ENCODE measurements at regions of chr12 and their contacts with region 1.

Region 1: DNA sequence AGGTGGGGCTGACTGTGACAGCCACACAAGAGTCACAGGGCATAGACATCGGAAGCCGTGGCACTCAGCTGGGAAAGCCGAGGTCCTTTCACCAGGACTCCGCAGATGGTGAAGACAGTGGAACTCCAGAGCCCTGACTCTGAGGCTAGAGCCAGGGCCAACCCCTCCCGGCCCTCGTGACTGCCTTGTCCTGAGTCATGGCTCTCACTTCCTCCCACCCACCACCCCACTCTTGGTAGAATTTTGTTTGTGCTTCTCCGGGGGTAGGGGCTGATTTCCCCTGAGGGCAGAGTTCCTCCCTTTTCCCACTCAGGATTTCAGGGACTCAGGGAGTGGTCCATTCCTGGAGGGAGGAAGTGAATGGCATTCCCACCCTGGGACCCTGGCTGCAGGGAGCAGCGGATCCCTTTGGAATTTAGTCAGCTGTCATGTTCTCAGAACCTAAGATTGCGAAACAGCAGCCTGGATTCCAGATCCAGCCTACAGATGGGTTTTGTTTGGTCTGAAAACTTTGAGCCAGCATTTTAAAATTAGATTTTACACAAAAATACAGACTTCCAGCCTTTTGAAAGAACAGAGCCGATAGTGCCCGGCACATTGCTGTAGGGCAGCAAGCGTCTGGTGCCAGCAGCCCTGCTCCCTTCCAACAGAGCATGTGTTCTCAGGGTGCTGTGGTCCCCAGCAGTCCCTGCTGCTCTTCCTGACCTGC is 50.7 kb downstream of the TPCN1 start:
- DNase-seq: no peak
- H3K4me3 Mint-ChIP-seq: no peak overlapping the region
- H3K27ac Mint-ChIP-seq: peak overlapping the region; percentile 36
- H3K4me1 Mint-ChIP-seq: peaks cover 15% of the 10 kb centered on the region
- H3K27me3 Mint-ChIP-seq: no peaks in the 10 kb centered on the region

Region 2: DNA sequence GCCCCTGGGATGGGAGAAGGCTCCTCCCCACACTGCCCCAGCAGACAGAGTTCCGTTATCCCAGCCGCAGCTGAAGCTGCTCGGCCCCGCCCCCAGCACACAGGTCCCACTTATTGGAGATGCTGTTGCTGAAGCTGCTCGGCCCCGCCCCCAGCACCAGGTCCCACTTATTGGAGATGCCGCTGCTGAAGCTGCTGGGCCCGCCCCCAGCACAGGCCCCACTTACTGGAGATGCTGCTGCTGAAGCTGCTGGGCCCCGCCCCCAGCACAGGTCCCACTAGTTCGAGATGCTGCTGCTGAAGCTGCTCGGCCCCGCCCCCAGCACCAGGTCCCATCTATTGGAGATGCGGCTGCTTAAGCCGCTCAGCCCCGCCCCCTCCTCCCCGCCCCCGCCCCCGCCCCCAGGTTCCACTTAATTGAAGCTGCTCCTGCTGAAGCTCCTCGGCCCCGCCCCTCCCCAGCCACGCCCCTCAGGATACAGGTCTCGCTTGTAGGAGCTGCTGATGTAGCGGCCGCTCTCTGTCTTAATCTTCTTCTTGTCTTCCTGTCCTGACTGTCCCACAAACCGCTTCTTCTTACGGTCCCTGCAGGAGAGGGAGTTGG is 110.5 kb before region 1 on chr12:
- intact Hi-C with region 1: no loop called
- DNase-seq: no peak
- H3K4me3 Mint-ChIP-seq: no peak overlapping the region
- H3K27ac Mint-ChIP-seq: no peak overlapping the region
- H3K4me1 Mint-ChIP-seq: no peaks in the 10 kb centered on the region
- H3K27me3 Mint-ChIP-seq: no peaks in the 10 kb centered on the region

Region 3: GRCh38 chr12:113261847-113262470 is 10.0 kb before region 1 on chr12:
- intact Hi-C with region 1: loop called (anchors 1 kb)
- DNase-seq: peak; percentile 38
- H3K4me3 Mint-ChIP-seq: peak overlapping the region; percentile 54
- H3K27ac Mint-ChIP-seq: peak overlapping the region; percentile 52
- H3K4me1 Mint-ChIP-seq: peaks cover 49% of the 10 kb centered on the region
- H3K27me3 Mint-ChIP-seq: no peaks in the 10 kb centered on the region

Measured in activated T-helper 2 cell treated with anti-CD3 and anti-CD28 coated beads, Interferon-gamma antibody, Interleukin-2, Interleukin-4, amounts not matched to agents 10 μg/mL and 5 μg/mL and 100 μg/mL, durations not matched to agents 14 hours and 24 hours and 36 hours (primary cell).